Adrenal gland (tissue), 19 donors: ENCODE measurements at regions of chr11 and their contacts with region 1.

Region 1: GRCh38 chr11:73652046-73652730 is 5.8 kb downstream of the PLEKHB1 start:
- DNase-seq: no peak
- H3K4me3 ChIP-seq: no peak overlapping the region
- H3K27ac ChIP-seq: no peak overlapping the region
- H3K4me1 ChIP-seq: peaks cover 0 to 7% of the 10 kb centered on the region in 2 donors
- H3K27me3 ChIP-seq: no peaks in the 10 kb centered on the region
- CTCF ChIP-seq: no peak
- POLR2A ChIP-seq: no peak

Region 2: DNA sequence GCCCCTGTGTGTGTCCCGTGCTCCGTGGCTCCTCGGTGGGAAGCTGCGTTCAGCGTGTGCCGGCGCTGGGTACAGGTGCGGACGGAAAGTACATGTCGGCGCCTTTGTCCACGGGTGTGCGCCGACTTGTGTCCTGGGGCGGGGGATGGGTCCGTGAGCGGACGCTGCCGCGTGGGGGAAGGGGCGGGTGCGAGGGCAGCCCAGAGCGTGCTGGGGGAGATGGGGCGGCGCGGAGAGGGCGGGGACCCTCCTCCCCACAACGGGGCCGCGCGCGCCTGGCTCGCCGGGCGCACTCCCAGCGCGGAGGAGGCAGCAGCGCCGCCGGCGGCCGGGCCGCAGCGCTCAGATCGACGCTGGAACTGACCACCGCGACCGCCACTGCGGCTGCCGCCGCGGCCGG is 309.6 kb before region 1 on chr11:
- intact Hi-C with region 1: loop called in 1 of 2 experiments (anchors 10 kb)
- DNase-seq: no peak
- H3K4me3 ChIP-seq: peak overlapping the region in 1 of 4 donors; percentile 52
- H3K27ac ChIP-seq: peak overlapping the region in 2 of 5 donors; percentile 16 to 65
- H3K4me1 ChIP-seq: peaks cover 5 to 17% of the 10 kb centered on the region in 2 donors
- H3K27me3 ChIP-seq: no peaks in the 10 kb centered on the region
- CTCF ChIP-seq: no peak
- POLR2A ChIP-seq: no peak

Region 3: GRCh38 chr11:73851046-73851764 is 199.0 kb after region 1 on chr11:
- intact Hi-C with region 1: no loop called
- DNase-seq: no peak
- H3K4me3 ChIP-seq: no peak overlapping the region
- H3K27ac ChIP-seq: no peak overlapping the region
- H3K4me1 ChIP-seq: no peaks in the 10 kb centered on the region
- H3K27me3 ChIP-seq: no peaks in the 10 kb centered on the region
- CTCF ChIP-seq: no peak
- POLR2A ChIP-seq: no peak